Ovary (tissue), 10 donors: ENCODE measurements at regions of chr1 and their contacts with region 1.

Region 1: GRCh38 chr1:6059866-6060265 is 14.2 kb downstream of the KCNAB2 start:
- DNase-seq: no peak
- H3K4me3 ChIP-seq: no peak overlapping the region
- H3K27ac ChIP-seq: no peak overlapping the region
- H3K4me1 ChIP-seq: peaks cover 3% of the 10 kb centered on the region
- H3K27me3 ChIP-seq: no peaks in the 10 kb centered on the region
- CTCF ChIP-seq: no peak
- EP300 ChIP-seq: no peak
- POLR2A ChIP-seq: no peak

Region 2: GRCh38 chr1:5992026-5992813 is 67.6 kb before region 1 on chr1 and contains the start of gene NPHP4:
- intact Hi-C with region 1: no loop called
- DNase-seq: peak; percentile 99 to 100 (median 99)
- H3K4me3 ChIP-seq: peak within 1 kb of the TSS; percentile 55
- H3K27ac ChIP-seq: peak within 1 kb of the TSS; percentile 86 to 87
- H3K4me1 ChIP-seq: peaks cover 8% of the 10 kb centered on the region
- H3K27me3 ChIP-seq: no peaks in the 10 kb centered on the region
- CTCF ChIP-seq: peak in 1 of 3 donors; percentile 20
- EP300 ChIP-seq: peak; percentile 15
- POLR2A ChIP-seq: peak; percentile 39
- total RNA-seq, gene NPHP4: 7.9 to 20.8 (median 11.0) TPM

Region 3: DNA sequence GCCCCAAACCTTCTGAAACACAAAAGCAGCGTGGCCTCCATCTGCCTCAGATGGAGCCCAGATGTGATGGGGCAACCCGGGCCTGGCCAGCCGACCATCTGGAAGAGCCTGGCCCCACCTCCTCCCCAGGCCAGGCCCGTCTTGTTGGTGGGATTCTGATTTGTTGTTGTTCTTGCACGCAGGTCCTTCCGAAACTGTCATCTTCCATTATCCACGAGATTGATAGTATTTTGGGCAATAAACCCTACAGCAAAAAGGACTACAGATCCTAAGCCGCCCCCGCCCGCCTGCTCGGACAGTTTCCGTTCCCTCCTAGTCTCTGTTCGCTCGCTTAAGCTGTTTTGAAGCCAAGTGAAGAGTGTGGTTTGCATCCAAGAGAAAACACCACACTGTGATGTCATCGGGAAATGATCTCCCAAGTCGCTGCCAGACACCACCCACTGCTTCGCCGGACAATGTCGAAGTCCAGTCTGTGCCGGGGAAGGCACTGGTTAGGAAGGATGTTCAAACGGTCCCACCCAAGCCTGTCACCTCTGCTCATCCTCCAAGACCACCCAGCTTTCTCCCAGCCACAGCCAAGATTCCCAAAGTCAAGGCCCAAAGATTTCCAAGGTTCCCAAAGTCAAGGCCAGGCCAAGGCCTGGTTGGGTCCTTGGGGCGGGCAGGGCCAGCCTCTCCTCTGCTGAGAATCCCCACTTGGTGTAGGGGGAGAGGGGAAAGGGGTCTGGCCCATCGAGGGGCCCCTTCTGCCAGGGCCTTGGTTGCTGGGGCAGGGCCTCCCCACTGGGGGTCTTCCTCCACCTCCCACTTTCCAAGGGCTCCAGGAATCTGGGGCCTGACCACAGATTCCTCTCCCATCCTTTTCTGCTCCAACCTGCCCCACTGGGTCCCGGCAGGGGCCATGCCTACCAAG is 38.7 kb after region 1 on chr1:
- intact Hi-C with region 1: no loop called
- DNase-seq: peak in 3 of 5 donors; percentile 23 to 54 (median 28)
- H3K4me3 ChIP-seq: no peak overlapping the region
- H3K27ac ChIP-seq: no peak overlapping the region
- H3K4me1 ChIP-seq: peaks cover 14% of the 10 kb centered on the region
- H3K27me3 ChIP-seq: no peaks in the 10 kb centered on the region
- CTCF ChIP-seq: no peak
- EP300 ChIP-seq: no peak
- POLR2A ChIP-seq: no peak

Region 4: GRCh38 chr1:6171548-6172119 is 111.8 kb after region 1 on chr1:
- intact Hi-C with region 1: loop called in 1 of 4 experiments (anchors 10 kb)
- DNase-seq: no peak
- H3K4me3 ChIP-seq: no peak overlapping the region
- H3K27ac ChIP-seq: no peak overlapping the region
- H3K4me1 ChIP-seq: no peaks in the 10 kb centered on the region
- H3K27me3 ChIP-seq: no peaks in the 10 kb centered on the region
- CTCF ChIP-seq: no peak
- EP300 ChIP-seq: no peak
- POLR2A ChIP-seq: no peak

Region 5: DNA sequence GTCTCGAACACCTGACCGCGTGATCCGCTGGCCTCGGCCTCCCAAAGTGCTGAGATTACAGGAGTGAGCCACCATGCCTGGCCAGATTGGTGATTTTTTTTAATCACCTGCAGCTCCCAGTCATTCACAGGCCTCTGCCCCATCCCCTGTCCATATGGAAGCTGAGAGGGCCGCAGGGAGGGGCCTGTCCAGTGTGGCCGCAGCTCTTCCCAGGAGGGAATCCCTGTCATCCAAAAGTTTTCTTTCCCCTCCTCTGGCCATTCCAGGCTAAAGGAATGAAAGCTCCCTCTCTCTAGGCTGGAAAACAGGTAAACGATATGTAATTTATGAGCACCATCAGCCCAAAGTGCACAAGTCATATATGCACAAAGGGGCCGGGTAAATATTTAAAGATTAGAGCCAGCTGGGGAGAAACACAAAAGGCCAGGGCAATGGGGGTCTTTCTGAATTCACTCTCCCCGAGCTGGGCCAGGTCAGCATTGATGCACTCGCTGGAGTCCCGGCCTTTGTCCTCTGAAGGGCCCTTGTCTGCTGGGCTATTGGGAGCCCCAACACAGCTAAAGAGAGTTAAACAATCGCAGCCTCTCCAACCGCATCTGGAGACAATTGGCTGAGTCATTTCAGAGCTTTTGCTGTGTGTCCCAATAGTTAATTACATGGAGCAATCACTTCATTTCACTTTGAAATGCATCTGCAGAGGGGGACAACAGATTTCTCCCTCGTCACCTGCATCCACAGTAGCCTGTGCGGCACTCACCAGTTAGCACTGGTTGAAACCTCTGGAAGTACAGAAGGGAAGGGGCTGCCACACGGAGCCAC is 180.3 kb after region 1 on chr1:
- intact Hi-C with region 1: loop called in 1 of 4 experiments (anchors 5 kb)
- DNase-seq: no peak
- H3K4me3 ChIP-seq: no peak overlapping the region
- H3K27ac ChIP-seq: no peak overlapping the region
- H3K4me1 ChIP-seq: peaks cover 4% of the 10 kb centered on the region
- H3K27me3 ChIP-seq: peaks cover 9% of the 10 kb centered on the region
- CTCF ChIP-seq: no peak
- EP300 ChIP-seq: no peak
- POLR2A ChIP-seq: no peak